ENCODE measurements at regions of chr15 and their contacts with region 1.

Region 1: GRCh38 chr15:48645558-48646330 is at the start of gene FBN1:
- DNase-seq: peak; percentile 78 to 79
- H3K4me3 ChIP-seq: peak within 1 kb of the TSS; percentile 72 to 76 (median 76)
- H3K27ac ChIP-seq: peak within 1 kb of the TSS; percentile 14 to 86 (median 85)
- H3K4me1 ChIP-seq: peaks cover 32 to 33% of the 10 kb centered on the region in 2 donors
- H3K27me3 ChIP-seq: no peaks in the 10 kb centered on the region
- CTCF ChIP-seq: no peak
- POLR2A ChIP-seq: peak in 1 of 2 donors; percentile 78
- total RNA-seq, gene FBN1: 113 to 147 (median 120) TPM

Region 2: DNA sequence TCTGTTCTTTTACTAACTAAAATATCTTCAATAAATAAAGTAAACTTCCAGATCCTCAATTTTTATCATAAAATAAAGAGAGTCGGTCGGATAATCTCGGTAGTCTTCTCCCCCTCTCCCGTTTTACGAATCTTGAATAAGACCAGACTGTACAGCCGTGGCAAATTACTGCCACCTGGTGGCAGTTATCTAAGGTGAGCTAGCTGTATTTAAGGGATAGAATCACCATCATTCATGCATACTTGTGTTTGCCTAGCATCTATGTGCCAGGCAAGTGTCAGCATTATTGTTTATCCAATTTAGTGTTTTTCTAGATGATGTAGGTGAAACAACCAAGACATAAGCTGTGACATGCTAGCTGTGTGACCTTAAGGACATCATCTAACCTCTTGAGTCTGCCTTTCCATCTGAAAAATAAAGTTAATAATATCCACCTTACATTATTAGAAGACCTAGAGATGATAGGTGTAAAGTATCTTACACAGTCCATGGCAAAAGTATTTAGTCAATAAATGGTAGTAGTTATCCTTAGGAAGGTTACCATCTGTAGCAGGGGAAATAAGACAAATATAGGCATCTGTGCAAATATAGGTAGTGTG is 293.2 kb before region 1 on chr15:
- intact Hi-C with region 1: loop called (anchors 10 kb)
- DNase-seq: peak; percentile 60 to 65
- H3K4me3 ChIP-seq: no peak overlapping the region
- H3K27ac ChIP-seq: no peak overlapping the region
- H3K4me1 ChIP-seq: no peaks in the 10 kb centered on the region
- H3K27me3 ChIP-seq: no peaks in the 10 kb centered on the region
- CTCF ChIP-seq: peak; percentile 47 to 84 (median 70)
- POLR2A ChIP-seq: no peak

Region 3: DNA sequence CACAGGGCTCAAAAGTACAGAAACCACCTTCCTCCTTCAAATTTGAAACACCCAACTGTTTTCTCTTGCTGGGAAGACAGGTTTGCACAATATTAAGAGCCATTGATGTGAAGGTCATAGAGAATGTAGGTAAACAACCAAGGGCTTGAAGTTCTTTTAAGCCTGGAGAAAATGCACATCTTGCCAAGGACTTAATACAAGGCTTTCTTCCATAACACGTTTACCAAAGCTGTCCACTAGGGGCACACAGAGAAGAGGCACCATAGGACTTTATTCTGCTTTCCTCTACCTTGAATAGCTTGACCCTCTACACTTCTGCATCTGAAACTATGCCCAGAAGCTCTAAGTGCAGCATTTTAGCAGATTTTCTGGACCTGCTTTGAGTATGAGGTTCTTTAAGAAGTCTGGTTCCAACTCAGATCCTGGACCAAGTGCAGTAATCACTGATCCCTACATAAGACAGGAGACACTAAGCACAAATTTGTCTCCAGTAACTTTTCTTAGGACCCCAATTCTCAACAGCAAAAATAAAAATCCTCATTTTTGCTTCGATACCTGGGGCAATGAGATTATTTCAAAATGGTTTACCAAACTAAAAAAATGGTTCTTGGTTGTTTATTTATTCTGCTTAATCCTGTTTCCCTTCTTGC is 138.2 kb before region 1 on chr15:
- intact Hi-C with region 1: loop called (anchors 10 kb)
- DNase-seq: peak; percentile 48 to 54
- H3K4me3 ChIP-seq: no peak overlapping the region
- H3K27ac ChIP-seq: peak overlapping the region in 2 of 3 donors; percentile 30 to 36
- H3K4me1 ChIP-seq: peaks cover 4 to 13% of the 10 kb centered on the region in 2 donors
- H3K27me3 ChIP-seq: no peaks in the 10 kb centered on the region
- CTCF ChIP-seq: peak in 5 of 6 experiments; percentile 46 to 75 (median 67)
- POLR2A ChIP-seq: no peak

Region 4: DNA sequence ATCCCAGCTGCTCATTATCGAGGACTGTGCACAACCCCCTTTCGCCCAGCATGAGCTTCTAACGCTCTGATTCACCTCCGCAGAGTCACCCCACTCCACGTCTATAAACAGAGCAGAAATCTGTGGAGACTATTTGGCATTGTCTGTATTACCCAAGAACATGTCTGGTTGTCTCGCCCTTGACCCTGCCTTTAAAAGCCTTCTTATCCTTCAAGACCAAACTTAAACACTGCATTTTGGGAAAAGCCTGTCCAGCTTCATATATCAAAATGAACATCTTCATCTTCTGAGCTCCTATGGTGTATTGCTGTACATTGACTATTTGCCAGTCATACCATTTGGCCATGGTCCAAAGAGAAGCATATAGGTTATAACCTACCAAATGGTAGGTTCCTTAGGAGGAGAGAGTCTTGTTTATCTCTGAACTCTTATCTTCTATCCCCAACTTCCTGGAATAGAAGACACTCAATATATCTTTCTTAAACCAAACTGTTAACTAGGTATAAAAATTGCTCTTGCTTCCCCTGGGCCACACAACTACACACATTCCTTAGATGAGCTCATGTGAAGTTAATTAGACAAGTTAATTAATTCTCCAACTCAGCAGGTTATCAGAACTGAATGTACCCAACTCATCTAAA is 90.4 kb before region 1 on chr15:
- intact Hi-C with region 1: no loop called
- DNase-seq: no peak
- H3K4me3 ChIP-seq: no peak overlapping the region
- H3K27ac ChIP-seq: no peak overlapping the region
- H3K4me1 ChIP-seq: peaks cover 16 to 42% of the 10 kb centered on the region in 2 donors
- H3K27me3 ChIP-seq: no peaks in the 10 kb centered on the region
- CTCF ChIP-seq: no peak
- POLR2A ChIP-seq: no peak

Region 5: DNA sequence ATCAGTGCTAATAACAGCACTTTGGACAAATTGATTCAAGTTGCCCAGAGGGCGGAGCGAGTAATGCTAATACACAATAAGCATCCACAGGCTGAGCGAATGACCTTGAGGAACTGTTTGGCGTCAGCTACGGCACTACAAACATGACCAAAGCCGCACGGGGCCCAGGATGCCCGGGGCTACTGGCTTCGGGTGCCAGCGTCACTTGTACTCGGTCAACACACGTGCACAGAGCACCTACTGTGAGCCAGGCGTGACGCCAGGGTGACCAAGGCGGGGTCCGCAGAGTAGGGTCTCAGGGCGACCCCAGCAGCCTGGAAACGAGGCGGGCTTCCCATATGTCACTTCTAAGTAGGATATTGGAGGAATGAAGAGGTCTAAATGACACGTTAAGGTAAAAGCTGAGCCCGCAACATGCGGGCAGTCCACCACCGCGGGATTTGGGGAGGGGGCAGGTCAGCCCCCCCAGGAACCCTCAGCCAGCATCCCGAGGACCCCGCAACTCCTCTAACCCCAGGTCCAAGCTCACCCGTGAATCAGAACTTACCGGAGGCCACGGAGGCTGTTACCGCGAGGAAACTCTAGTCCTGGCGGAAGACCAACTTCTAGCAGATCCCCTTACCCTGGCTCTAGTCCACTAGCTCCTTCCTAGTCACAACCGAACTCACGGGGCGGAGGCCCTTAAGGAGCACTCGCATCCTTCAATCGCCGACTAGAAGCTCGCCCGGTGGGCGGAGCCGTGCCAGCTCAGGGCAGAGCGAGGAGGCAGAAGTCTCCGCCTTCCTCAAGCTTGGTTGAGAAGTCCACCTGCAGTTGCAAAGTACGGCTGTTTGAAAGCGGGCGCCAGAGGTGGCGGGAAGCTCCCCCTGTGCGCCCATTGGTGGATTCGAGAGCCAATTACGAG is 164.9 kb after region 1 on chr15 and contains the start of gene CEP152:
- intact Hi-C with region 1: loop called (anchors 10 kb)
- DNase-seq: peak; percentile 99
- H3K4me3 ChIP-seq: peak within 1 kb of the TSS; percentile 36 to 74 (median 54)
- H3K27ac ChIP-seq: peak within 1 kb of the TSS in 1 of 3 donors; percentile 21
- H3K4me1 ChIP-seq: peaks cover 0 to 13% of the 10 kb centered on the region in 2 donors
- H3K27me3 ChIP-seq: no peaks in the 10 kb centered on the region
- CTCF ChIP-seq: no peak
- POLR2A ChIP-seq: no peak
- total RNA-seq, gene CEP152: 5.5 to 7.7 (median 6.8) TPM